ENCODE measurements at regions of chr1 and their contacts with region 1.

Region 1: GRCh38 chr1:21539933-21540332 is 30.7 kb downstream of the ALPL start:
- DNase-seq: peak; percentile 73
- ATAC-seq: peak; percentile 35

Region 2: DNA sequence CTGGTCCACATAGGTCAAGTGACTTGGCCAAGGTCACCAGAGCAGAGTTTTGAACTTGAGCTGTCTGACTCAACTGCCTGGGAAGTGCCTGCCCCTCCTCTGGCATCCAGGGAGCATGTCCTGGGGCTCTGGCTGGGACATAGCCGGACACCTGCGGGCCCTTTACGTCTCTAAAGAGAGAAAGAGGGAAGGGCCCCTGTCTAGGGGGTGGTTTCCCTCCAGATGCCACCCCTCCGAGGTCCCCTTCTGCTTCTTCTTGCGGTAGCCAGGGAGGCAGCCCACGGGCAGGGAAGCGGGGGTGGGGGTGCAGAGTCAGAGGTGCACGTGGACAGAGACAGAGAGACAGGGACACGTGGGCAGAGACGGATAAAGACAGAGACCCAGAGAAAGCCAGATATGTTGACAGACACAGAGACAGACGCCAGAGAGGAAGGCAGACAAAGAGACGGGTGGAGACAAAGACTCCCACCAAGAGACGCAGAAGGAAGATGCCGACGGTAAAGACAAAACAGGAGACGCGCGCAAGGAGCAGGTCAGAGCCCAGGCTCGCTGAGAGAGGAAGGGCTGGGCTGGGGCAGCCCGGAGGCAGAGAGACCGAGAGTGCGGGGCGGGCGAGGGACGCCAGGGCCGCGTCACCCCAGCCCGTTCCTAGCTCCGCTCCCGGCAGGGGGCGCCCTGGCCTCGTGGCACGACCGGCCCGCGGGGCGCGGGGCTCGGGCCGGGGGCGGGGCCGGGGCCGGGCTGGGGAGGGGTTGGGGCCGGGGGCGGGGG is 31.2 kb before region 1 on chr1:
- intact Hi-C with region 1: loop called (anchors 2 kb)
- DNase-seq: peak; percentile 90
- ATAC-seq: peak; percentile 81

Measured in Right ventricle myocardium inferior (tissue), 1 donor.